ENCODE measurements at regions of chr3 and their contacts with region 1.

Region 1: GRCh38 chr3:112013058-112013783 is 14.5 kb downstream of the TAGLN3 start:
- DNase-seq: peak; percentile 87
- H3K4me3 Mint-ChIP-seq: no peak overlapping the region
- H3K27ac Mint-ChIP-seq: peak overlapping the region; percentile 56
- H3K4me1 Mint-ChIP-seq: peaks cover 23% of the 10 kb centered on the region
- H3K27me3 Mint-ChIP-seq: no peaks in the 10 kb centered on the region

Region 2: DNA sequence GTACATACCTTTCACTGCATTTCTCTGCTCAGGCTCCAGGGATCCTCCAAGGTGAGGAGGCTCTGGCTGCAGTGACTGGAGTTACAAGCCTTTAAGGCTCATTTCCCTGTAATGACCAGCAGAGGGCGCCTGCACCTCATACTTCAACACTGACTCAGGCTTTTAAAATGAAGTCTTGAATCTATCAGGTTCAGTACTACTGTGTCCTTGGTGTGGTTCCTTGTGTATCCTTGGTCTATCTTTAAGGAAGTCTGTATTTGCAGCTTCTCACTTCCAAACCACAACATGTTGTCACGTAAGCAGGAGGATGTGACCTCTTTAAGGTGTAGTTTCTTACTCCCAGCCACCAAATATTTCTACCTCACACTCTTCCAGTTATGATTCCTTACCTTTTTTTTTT is 295.6 kb before region 1 on chr3:
- intact Hi-C with region 1: loop called (anchors 1 kb)
- DNase-seq: peak; percentile 87
- H3K4me3 Mint-ChIP-seq: no peak overlapping the region
- H3K27ac Mint-ChIP-seq: no peak overlapping the region
- H3K4me1 Mint-ChIP-seq: peaks cover 5% of the 10 kb centered on the region
- H3K27me3 Mint-ChIP-seq: no peaks in the 10 kb centered on the region

Region 3: DNA sequence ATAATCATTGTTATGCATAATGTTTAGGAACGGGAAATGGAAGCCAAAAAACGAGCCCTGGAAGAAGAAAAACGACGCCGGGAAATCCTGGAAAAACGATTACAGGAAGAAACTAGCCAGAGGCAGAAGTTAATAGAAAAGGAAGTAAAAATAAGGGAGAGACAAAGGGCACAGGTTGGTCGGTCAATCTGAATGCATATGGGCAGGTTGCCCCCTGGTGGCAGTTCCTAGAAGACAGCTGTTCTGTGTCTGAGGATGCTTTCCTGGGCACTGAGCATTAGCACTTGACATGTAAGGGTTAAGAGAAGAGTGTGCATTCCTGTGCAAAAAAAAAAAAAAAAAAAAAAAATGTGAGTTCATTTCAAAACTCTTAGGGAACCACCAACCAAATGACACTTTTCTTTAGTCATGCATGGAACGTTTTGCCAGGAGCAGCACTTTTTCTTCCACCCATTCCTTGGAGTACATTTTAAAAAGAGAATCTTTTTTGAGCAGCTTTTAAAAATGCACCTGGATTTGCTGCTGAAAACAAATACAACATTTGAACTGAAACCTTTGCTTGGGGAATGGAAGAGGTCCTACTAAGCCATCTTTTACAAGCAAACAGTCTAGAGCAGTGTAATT is 45.5 kb before region 1 on chr3:
- intact Hi-C with region 1: loop called (anchors 2 kb)
- DNase-seq: peak; percentile 94
- H3K4me3 Mint-ChIP-seq: no peak overlapping the region
- H3K27ac Mint-ChIP-seq: no peak overlapping the region
- H3K4me1 Mint-ChIP-seq: peaks cover 15% of the 10 kb centered on the region
- H3K27me3 Mint-ChIP-seq: peaks cover 1% of the 10 kb centered on the region

Region 4: GRCh38 chr3:111989061-111989678 is 24.1 kb before region 1 on chr3:
- intact Hi-C with region 1: loop called (anchors 1 kb)
- DNase-seq: peak; percentile 68
- H3K4me3 Mint-ChIP-seq: no peak overlapping the region
- H3K27ac Mint-ChIP-seq: no peak overlapping the region
- H3K4me1 Mint-ChIP-seq: peaks cover 38% of the 10 kb centered on the region
- H3K27me3 Mint-ChIP-seq: no peaks in the 10 kb centered on the region

Region 5: DNA sequence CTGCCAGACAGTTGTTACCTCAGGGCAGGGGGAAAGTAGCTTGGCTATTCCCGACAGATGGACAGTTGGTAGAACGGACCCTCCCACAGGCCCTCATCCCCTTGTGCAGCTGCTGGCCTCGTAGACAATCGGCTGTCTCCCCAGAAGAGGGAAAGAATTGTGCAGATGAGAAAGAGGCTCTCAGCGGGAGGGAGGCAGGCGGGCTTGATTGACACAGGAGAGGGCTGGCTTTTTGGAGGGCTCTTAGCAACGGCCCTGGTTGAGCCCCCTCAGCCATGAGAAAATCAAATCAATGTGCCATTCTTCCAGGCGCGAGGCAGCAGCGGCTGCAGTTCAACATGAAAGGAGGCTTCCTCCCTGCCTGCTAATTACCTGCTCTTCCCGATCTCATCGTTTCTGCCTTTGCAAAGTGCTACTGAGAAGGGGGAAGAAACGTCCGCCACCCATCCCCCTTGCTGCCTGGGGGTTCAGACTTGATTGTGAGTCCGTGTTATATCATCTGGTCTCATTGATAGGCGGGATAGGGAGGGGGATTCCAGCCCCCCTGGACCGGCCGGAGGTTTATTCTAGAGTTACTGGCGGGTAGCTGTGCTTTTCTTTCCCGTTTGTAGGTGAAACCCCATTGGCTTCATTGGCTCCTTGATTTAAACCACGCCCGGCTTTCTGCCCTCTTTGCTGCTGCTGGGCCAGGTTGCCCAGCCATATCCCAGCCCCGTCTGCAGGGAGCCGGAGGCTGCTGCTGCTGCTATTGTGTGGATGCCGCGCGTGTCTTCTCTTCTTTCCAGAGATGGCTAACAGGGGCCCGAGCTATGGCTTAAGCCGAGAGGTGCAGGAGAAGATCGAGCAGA is 14.4 kb before region 1 on chr3 and contains the start of gene TAGLN3:
- intact Hi-C with region 1: loop called (anchors 1 kb)
- DNase-seq: no peak
- H3K4me3 Mint-ChIP-seq: peak within 1 kb of the TSS; percentile 77
- H3K27ac Mint-ChIP-seq: no peak within 1 kb of the TSS
- H3K4me1 Mint-ChIP-seq: peaks cover 38% of the 10 kb centered on the region
- H3K27me3 Mint-ChIP-seq: no peaks in the 10 kb centered on the region
- total RNA-seq, gene TAGLN3: 0.33 and 0.44 TPM in 2 replicates

Region 6: DNA sequence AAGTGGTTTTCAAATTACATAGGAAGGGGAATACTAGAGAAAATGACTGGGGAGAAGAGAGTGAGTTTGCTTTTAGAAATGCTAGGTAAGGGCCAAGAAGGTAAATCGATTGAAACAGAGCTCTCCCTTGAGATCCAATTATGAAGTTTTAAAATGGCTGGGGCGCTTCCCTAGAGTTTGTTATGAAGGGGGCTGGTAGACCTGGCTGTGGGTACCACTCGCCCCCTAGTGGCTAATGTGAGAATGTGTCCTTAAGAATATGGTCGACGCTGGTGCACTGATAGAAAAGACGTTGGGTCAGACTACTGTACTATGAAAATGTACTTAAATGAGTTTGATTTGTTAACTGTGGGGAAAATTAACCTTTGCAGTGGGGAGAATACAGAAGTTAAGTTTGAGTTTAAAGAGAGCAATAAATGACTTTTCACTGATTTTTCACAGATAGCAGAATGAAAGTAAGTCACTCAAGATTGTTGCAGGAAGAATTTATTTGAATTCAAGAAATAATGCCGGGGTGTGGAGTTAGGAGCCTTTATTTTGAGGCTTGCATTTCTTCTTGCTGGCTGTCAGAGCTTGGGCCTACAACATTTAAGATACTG is 30.5 kb after region 1 on chr3:
- intact Hi-C with region 1: loop called (anchors 1 kb)
- DNase-seq: peak; percentile 80
- H3K4me3 Mint-ChIP-seq: no peak overlapping the region
- H3K27ac Mint-ChIP-seq: no peak overlapping the region
- H3K4me1 Mint-ChIP-seq: peaks cover 5% of the 10 kb centered on the region
- H3K27me3 Mint-ChIP-seq: peaks cover 6% of the 10 kb centered on the region